Activated CD4-positive, alpha-beta T cell treated with anti-CD3 and anti-CD28 coated beads, Interleukin-2, amount 10 ng/mL, durations not matched to agents 7 days and 5 days (primary cell): ENCODE measurements at regions of chr13 and their contacts with region 1.

Region 1: DNA sequence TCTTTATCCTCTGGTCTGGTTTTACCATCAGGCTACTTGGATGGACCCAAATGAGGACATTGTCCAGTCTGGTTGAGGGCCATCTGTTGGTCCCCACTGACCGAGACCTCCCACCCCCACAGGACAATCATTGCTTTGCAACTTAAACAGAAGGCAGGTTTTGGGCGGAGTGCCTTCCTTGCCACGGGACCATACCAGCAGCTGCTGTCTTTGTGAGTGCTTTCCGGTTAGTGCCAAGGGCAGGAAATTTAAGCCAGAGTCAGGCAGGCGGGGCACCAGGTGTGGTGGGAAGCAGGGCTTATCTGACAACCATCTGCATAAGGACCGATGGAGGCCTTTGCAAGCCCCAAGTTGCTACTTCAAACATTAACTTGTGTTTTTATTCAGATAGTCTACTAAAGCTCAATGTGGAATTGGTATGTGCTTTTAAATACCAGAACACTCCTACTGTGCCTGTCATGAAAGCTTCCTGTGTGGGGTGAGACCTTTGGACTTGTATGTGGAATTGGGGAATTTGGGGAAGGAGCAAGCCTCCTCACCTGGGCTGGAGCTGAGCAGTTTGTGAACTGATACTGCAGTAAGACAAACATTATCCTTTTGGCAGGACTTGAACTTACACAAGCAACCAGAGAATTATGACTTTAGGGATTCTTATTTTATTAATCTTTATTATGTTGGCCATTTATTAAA is 39.3 kb upstream of the UBE2L5 start:
- DNase-seq: peak; percentile 8
- H3K4me3 Mint-ChIP-seq: peak overlapping the region; percentile 43
- H3K27ac Mint-ChIP-seq: peak overlapping the region; percentile 61
- H3K4me1 Mint-ChIP-seq: peaks cover 62% of the 10 kb centered on the region
- H3K27me3 Mint-ChIP-seq: no peaks in the 10 kb centered on the region

Region 2: GRCh38 chr13:30360586-30360985 is 22.4 kb before region 1 on chr13:
- CTCF ChIA-PET with region 1: no interaction called
- POLR2A ChIA-PET with region 1: no interaction called
- DNase-seq: no peak
- H3K4me3 Mint-ChIP-seq: no peak overlapping the region
- H3K27ac Mint-ChIP-seq: no peak overlapping the region
- H3K4me1 Mint-ChIP-seq: peaks cover 18% of the 10 kb centered on the region
- H3K27me3 Mint-ChIP-seq: no peaks in the 10 kb centered on the region

Region 3: GRCh38 chr13:30395192-30396084 is 12.5 kb after region 1 on chr13:
- CTCF ChIA-PET with region 1: interaction called, 49 read pairs
- POLR2A ChIA-PET with region 1: no interaction called
- DNase-seq: peak; percentile 82
- H3K4me3 Mint-ChIP-seq: peak overlapping the region; percentile 79
- H3K27ac Mint-ChIP-seq: peak overlapping the region; percentile 100
- H3K4me1 Mint-ChIP-seq: peaks cover 62% of the 10 kb centered on the region
- H3K27me3 Mint-ChIP-seq: no peaks in the 10 kb centered on the region

Region 4: DNA sequence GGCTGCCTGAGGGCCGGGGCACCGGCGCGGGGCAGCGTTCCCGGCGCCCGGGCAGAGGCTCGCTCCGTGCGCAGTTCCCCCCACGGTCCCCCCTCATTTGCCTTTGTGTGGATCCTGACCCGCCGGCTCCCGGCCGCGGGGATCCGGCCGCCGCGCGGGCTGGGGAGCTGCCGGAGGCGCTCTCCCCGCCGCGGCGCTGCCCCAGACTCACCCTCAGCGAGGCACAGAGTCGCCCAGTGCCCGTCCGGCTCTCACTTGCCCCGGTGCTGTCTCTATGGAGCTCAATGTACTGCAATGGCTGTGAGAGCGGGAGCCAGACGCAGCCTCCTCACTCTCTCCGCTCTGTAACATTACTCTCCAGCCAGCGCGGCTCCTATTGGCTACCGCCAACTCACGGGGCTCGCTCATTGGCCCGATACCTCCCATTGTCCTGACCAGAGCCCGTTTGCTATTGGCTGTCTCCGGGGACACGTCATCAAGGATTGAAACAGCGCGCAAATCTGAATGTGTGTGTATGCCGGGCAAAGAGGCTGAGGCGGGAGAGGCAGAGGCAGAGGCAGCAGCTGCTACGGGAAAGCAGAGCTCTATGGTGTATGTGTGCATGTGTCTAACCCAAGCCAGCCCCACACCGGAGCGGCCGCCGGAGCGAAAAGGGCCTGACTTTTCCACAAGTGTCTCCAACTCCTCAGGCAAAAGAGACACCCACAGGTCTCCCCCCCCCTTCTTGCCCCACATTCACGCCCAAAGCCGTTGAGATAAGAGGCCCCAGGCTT is 82.8 kb after region 1 on chr13 and contains the start of gene HMGB1:
- CTCF ChIA-PET with region 1: no interaction called
- POLR2A ChIA-PET with region 1: no interaction called
- DNase-seq: peak; percentile 99
- H3K4me3 Mint-ChIP-seq: peak within 1 kb of the TSS; percentile 84
- H3K27ac Mint-ChIP-seq: peak within 1 kb of the TSS; percentile 99
- H3K4me1 Mint-ChIP-seq: peaks cover 34% of the 10 kb centered on the region
- H3K27me3 Mint-ChIP-seq: no peaks in the 10 kb centered on the region
- total RNA-seq, gene HMGB1: 709 to 827 TPM